Activated B cell treated with CpG ODN at 0.5 μM for 24 hours (primary cell): ENCODE measurements at regions of chr19 and their contacts with region 1.

Region 1: GRCh38 chr19:46661020-46661731 is at the start of gene DACT3:
- DNase-seq: peak; percentile 100
- ATAC-seq: peak; percentile 91
- H3K4me3 Mint-ChIP-seq: peak within 1 kb of the TSS; percentile 83
- H3K27ac Mint-ChIP-seq: peak within 1 kb of the TSS; percentile 78
- H3K4me1 Mint-ChIP-seq: peaks cover 23% of the 10 kb centered on the region
- H3K27me3 Mint-ChIP-seq: peaks cover 17% of the 10 kb centered on the region
- CTCF ChIP-seq: no peak
- total RNA-seq, gene DACT3: 0.49 and 0.75 TPM in 2 replicates

Region 2: DNA sequence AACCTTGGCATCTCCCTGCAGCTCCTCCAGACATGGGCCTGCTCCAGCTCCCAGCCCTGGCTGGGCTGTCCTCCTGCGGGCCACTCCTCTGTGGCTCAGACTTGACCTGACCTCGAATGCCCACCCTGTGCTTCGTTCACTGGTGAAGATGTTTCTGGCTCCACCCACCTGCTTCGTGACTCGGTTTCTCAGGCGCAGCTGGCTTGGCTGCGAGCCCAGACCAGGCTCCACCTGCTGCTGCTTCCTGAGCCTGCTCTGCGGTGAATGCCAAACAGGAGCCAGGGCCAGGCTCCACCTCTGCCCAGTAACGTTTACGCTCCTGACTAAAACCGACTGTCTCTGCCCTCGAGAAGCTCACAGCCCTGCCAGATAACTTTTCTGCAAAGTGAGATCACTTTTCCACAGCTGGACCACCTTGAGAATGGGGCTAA is 837.1 kb before region 1 on chr19:
- CTCF ChIA-PET with region 1: no interaction called
- POLR2A ChIA-PET with region 1: no interaction called
- intact Hi-C with region 1: no loop called
- DNase-seq: no peak
- ATAC-seq: no peak
- H3K4me3 Mint-ChIP-seq: no peak overlapping the region
- H3K27ac Mint-ChIP-seq: no peak overlapping the region
- H3K4me1 Mint-ChIP-seq: no peaks in the 10 kb centered on the region
- H3K27me3 Mint-ChIP-seq: no peaks in the 10 kb centered on the region
- CTCF ChIP-seq: no peak

Region 3: DNA sequence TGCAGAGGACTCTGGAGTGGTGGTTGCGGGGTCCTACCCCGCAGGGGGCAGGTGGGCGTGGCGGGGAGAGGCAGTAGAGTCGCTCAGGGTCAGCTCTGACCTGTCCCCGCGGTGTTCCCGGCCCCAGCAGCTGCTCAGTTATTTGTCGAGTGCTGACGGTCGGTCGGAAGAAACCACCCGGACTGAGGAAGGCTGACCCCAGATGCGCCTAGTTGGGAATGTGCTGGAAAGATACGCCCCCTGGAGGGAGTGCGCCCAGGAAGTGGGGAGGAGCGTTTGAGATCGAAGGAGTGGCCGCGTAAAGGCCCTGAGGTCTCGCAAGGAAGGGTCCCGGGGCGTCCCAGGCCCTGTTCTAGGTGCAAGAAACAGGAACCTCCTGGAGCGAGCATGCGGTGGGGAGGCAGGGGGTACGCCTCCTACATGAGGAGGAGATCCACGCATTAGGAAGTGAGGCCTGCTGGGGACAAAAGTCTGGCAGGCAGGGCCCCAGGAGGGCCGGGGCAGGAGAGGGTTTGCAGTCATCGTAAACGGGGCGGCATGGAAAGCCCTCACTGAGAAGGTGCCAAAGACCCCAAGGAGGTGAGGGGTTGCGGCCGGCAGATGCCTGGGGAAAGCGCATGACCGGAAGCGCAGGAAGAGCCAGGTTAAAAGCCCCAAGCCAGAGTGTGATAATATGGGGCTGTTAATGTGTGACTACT is 257.0 kb before region 1 on chr19:
- CTCF ChIA-PET with region 1: no interaction called
- POLR2A ChIA-PET with region 1: no interaction called
- intact Hi-C with region 1: loop called (anchors 5 kb)
- DNase-seq: no peak
- ATAC-seq: no peak
- H3K4me3 Mint-ChIP-seq: peak overlapping the region; percentile 45
- H3K27ac Mint-ChIP-seq: no peak overlapping the region
- H3K4me1 Mint-ChIP-seq: peaks cover 15% of the 10 kb centered on the region
- H3K27me3 Mint-ChIP-seq: peaks cover 53% of the 10 kb centered on the region
- CTCF ChIP-seq: no peak

Region 4: DNA sequence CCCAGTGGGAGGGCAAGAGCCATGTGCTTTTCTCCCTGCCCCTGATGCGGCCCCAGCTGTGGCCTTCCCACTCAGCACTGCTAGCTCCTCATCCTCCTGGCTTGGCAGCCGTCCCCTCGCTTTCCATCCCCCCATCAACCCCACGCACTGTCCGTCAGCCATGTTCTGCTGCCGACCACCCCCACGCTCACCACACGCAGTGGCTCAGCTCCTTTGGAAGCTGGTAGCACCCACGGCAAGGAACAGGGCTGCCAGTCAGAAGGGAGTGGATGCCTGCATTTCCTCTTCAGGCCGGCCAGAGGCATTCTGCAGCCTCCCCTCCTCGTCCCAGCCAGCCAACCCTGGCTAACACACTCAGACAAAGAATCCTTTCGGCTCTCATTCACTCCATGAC is 53.7 kb before region 1 on chr19:
- CTCF ChIA-PET with region 1: interaction called, 234 read pairs
- POLR2A ChIA-PET with region 1: interaction called, 67 read pairs
- intact Hi-C with region 1: no loop called
- DNase-seq: no peak
- ATAC-seq: no peak
- H3K4me3 Mint-ChIP-seq: no peak overlapping the region
- H3K27ac Mint-ChIP-seq: no peak overlapping the region
- H3K4me1 Mint-ChIP-seq: peaks cover 35% of the 10 kb centered on the region
- H3K27me3 Mint-ChIP-seq: no peaks in the 10 kb centered on the region
- CTCF ChIP-seq: no peak

Region 5: GRCh38 chr19:46624958-46625661 is 36.1 kb before region 1 on chr19 and contains the start of gene PTGIR:
- CTCF ChIA-PET with region 1: interaction called, 12 read pairs
- POLR2A ChIA-PET with region 1: interaction called, 75 read pairs
- intact Hi-C with region 1: no loop called
- DNase-seq: no peak
- ATAC-seq: peak; percentile 29
- H3K4me3 Mint-ChIP-seq: peak within 1 kb of the TSS; percentile 80
- H3K27ac Mint-ChIP-seq: peak within 1 kb of the TSS; percentile 67
- H3K4me1 Mint-ChIP-seq: peaks cover 64% of the 10 kb centered on the region
- H3K27me3 Mint-ChIP-seq: no peaks in the 10 kb centered on the region
- CTCF ChIP-seq: no peak
- total RNA-seq, gene PTGIR: 13.4 and 17.8 TPM in 2 replicates

Region 6: GRCh38 chr19:46728693-46729676 is 67.8 kb after region 1 on chr19:
- CTCF ChIA-PET with region 1: interaction called, 17 read pairs
- POLR2A ChIA-PET with region 1: interaction called, 6 read pairs
- intact Hi-C with region 1: loop called (anchors 1 kb)
- DNase-seq: peak; percentile 82
- ATAC-seq: peak; percentile 97
- H3K4me3 Mint-ChIP-seq: no peak overlapping the region
- H3K27ac Mint-ChIP-seq: no peak overlapping the region
- H3K4me1 Mint-ChIP-seq: peaks cover 30% of the 10 kb centered on the region
- H3K27me3 Mint-ChIP-seq: no peaks in the 10 kb centered on the region
- CTCF ChIP-seq: no peak